ENCODE measurements at regions of chr2 and their contacts with region 1.

Region 1: GRCh38 chr2:38141501-38141900 is 65.5 kb upstream of the CYP1B1 start:
- DNase-seq: no peak
- H3K4me3 Mint-ChIP-seq: no peak overlapping the region
- H3K27ac Mint-ChIP-seq: no peak overlapping the region
- H3K4me1 Mint-ChIP-seq: no peaks in the 10 kb centered on the region
- H3K27me3 Mint-ChIP-seq: peaks cover 6% of the 10 kb centered on the region

Region 2: DNA sequence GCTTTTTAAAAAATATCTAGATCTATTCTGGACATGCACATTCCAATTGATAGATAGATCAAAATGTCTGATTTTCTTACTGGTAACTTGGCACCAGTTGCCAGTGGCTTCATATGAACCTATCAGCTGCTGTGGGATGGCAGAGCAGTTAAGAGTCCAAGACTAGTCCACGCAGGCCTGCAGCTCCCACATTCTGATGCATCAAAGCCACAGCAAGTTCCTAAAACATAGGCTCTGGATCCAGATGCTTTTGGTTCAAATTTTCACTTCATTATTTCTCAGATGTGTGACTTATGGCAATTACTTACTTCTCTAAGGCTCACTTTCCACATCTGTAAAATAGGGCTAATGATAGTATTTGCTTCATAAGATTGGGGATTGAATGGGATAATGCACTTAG is 17.6 kb before region 1 on chr2:
- CTCF ChIA-PET with region 1: no interaction called
- POLR2A ChIA-PET with region 1: no interaction called
- intact Hi-C with region 1: loop called (anchors 1 kb)
- DNase-seq: no peak
- H3K4me3 Mint-ChIP-seq: no peak overlapping the region
- H3K27ac Mint-ChIP-seq: no peak overlapping the region
- H3K4me1 Mint-ChIP-seq: no peaks in the 10 kb centered on the region
- H3K27me3 Mint-ChIP-seq: peaks cover 1% of the 10 kb centered on the region

Measured in activated CD4-positive, alpha-beta memory T cell treated with anti-CD3 and anti-CD28 coated beads for 36 hours (primary cell).